ENCODE measurements at regions of chr1 and their contacts with region 1.

Region 1: GRCh38 chr1:160951443-160952128 is 3.0 kb downstream of the ITLN2 start:
- DNase-seq: peak; percentile 81
- H3K4me3 Mint-ChIP-seq: no peak overlapping the region
- H3K27ac Mint-ChIP-seq: no peak overlapping the region
- H3K4me1 Mint-ChIP-seq: peaks cover 7% of the 10 kb centered on the region
- H3K27me3 Mint-ChIP-seq: no peaks in the 10 kb centered on the region

Region 2: DNA sequence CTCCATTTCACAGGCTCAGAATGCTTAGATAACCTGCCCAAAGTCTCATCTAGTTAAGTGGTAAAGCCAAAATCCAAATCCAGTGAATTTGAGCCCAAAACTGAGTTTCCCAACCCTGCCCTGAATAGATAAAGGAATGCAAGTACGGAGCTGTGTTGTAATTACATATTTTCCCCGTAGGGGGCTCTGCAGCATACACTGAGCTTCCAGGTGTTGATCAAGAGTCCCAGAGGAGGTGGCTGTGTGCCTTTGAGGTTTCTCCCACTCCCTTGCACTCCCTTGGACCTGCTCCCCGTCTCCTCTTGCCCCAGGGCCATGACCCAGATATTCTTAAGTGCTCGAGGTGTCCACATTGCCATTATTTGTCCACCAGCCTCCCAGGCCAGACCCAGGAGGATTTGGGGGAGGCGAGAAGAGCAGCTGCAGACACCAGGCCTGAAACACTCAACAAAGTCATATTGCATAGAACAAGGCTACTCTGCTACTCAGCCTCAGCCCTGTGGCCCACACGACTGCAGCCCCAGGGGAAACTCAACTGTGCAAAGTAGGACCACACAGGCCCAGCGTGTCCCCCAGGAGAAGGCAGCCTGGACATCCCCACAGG is 174.0 kb before region 1 on chr1:
- CTCF ChIA-PET with region 1: interaction called, 70 read pairs
- POLR2A ChIA-PET with region 1: no interaction called
- DNase-seq: peak; percentile 56
- H3K4me3 Mint-ChIP-seq: no peak overlapping the region
- H3K27ac Mint-ChIP-seq: no peak overlapping the region
- H3K4me1 Mint-ChIP-seq: peaks cover 37% of the 10 kb centered on the region
- H3K27me3 Mint-ChIP-seq: no peaks in the 10 kb centered on the region

Region 3: GRCh38 chr1:160830321-160831153 is 121.0 kb before region 1 on chr1:
- CTCF ChIA-PET with region 1: interaction called, 300 read pairs
- POLR2A ChIA-PET with region 1: interaction called, 21 read pairs
- DNase-seq: peak; percentile 80
- H3K4me3 Mint-ChIP-seq: no peak overlapping the region
- H3K27ac Mint-ChIP-seq: no peak overlapping the region
- H3K4me1 Mint-ChIP-seq: peaks cover 18% of the 10 kb centered on the region
- H3K27me3 Mint-ChIP-seq: no peaks in the 10 kb centered on the region

Region 4: DNA sequence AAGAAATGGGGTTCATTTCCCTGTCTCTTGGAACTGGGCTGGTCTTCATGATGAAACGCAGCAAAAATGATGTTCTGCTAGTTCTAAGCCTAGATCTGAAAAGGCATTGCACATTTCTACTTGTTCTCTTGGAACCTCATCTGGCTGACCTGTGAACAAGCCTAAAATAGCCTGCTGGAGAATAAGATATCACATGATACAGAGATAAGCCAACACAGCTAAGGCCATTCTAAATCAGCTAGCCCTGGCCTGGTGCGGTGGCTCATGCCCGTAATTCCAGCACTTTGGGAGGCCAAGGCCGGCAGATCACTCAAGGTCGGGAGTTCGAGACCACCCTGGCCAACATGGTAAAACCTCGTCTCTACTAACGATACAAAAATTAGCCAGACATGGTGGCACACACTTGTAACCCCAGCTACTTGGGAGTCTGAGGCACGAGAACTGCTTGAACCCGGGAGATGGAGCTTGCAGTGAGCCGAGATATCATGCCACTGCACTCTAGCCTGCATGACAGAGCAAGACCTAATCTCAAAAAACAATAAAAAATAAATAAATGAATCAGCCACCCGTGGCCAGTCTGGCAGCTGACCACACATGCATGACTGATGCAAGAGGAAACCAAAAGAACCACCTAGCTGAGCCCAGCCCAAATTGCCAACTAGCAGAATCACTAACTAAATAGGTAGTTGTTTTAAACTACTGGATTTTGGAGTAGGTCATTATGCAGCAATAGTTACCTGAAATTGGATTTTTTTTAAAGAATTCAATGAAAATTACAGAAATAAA is 106.9 kb before region 1 on chr1:
- CTCF ChIA-PET with region 1: interaction called, 300 read pairs
- POLR2A ChIA-PET with region 1: no interaction called
- DNase-seq: peak; percentile 39
- H3K4me3 Mint-ChIP-seq: no peak overlapping the region
- H3K27ac Mint-ChIP-seq: peak overlapping the region; percentile 36
- H3K4me1 Mint-ChIP-seq: peaks cover 22% of the 10 kb centered on the region
- H3K27me3 Mint-ChIP-seq: peaks cover 15% of the 10 kb centered on the region

Region 5: DNA sequence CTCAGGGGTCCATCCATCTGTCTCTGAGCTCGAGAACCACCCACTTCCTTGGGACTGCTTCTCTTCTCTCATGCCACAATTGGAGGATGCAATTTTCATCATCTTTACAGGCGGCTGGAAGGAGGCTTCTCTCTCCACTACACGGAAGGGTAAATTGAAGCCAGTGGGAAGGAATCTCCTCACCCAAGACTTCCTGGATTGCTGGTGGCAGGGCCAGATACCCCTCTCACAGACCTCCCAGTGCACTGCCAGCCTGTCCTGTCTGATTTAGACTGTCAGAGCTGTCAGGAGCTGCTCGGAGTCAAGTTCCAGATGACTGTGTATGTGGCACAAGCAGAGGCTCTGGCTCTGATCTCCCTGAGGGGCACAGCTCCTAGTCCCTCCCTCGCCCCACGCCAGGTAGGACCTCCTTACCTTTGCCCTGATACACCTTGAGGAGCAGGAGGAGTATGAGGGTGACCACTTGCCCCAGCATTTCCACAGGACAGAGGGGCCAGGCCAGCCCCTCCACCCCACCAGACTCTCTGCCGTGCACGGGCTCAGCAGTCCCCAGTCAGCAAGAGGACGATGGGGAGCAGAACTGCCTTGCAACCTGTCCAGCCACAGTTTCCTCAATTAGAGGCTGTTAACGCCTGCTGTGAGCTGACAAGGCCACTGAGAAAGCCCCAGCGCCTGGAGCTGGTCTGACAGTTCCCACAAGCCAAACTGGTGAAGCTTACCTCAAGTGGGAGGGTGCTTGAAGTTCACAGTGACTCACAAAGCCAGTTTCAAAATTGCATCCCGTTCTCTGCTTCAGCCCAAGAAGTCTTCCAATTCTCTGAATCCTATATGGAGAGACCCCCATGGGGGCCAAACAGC is 89.2 kb before region 1 on chr1 and contains the start of gene CD244:
- CTCF ChIA-PET with region 1: interaction called, 10 read pairs
- POLR2A ChIA-PET with region 1: no interaction called
- DNase-seq: peak; percentile 73
- H3K4me3 Mint-ChIP-seq: peak within 1 kb of the TSS; percentile 33
- H3K27ac Mint-ChIP-seq: peak within 1 kb of the TSS; percentile 66
- H3K4me1 Mint-ChIP-seq: peaks cover 29% of the 10 kb centered on the region
- H3K27me3 Mint-ChIP-seq: peaks cover 3% of the 10 kb centered on the region
- total RNA-seq, gene CD244: 2.0 to 2.3 TPM

Region 6: DNA sequence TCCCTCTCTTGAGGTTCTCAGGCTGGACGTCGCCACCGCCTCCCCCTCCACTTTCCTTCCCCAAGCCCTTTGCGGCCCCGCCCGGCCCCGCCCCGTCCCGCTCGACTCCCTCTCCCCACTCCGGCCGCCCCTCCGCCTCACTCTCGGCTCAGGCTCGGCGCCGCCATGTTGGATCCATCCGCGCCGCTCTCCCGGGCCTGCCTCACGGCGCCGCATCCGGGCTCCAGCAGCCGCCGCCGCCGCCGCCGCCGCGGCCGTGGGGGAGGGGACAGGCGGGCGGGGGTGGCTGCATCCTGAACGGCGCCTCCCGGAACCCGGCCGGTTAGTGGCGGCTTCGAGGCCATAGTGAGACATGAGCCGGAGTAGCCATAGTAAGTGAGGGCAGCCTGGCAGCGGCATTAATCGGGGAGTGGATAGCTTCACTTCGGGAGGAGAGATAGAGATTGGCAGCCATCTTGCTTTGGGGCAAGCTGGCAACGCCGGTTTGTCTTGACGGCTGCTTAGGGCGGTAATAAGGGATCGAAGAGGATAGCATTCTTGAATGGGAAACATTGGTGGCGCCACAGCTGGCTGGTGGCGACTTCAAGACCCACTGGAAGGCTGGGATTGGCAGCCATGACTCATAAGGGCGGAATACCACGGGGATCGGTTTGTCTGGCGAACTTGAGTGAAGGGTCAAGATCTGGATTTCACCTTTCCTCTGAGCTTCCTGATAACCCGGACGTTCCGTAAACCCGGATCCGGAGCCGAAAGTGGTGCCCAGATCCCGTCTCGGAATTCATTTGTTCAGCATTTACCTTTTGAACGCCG is 181.0 kb after region 1 on chr1 and contains the start of gene DEDD:
- CTCF ChIA-PET with region 1: no interaction called
- POLR2A ChIA-PET with region 1: no interaction called
- DNase-seq: peak; percentile 94
- H3K4me3 Mint-ChIP-seq: no peak within 1 kb of the TSS
- H3K27ac Mint-ChIP-seq: no peak within 1 kb of the TSS
- H3K4me1 Mint-ChIP-seq: peaks cover 43% of the 10 kb centered on the region
- H3K27me3 Mint-ChIP-seq: no peaks in the 10 kb centered on the region
- total RNA-seq, gene DEDD: 38.2 to 40.0 TPM

Region 7: DNA sequence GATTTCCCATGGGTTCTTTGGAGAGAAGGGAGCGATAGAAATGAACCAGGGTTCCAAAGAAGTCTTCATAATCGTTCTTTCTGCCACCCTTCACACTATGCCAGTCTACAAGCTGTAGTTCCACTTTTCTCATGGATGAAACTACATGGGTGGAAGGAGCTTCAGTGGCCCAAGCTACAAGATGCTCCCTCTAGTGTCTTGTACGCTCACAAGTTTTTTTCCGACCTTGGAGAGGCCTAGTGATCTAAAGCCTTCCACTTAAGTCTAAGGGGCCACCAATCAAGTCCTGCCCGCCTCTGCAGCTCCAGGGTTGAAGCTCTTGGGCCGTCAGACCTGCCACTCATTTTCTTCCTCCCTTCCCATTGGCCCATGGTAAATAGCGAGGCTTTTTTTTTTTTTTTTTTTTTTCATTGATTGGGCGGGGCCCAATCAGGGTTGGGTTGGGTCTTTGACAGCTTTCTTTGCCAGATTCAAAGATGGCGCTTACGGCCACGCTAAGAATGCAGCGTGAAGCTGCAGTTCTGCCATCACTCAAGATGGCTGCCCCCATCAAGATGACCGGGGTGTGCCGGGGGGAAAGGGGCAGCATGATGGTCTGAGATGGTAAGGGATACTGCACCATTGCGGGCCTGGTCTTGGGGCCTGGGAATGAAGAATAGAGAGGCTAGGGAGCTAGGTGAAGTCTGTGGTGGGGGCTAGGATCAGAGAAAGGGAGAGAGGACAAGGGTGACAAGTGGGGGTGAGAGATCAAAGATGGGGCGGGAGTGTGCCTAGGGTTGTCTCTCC is 274.1 kb after region 1 on chr1 and contains the start of gene TOMM40L:
- CTCF ChIA-PET with region 1: no interaction called
- POLR2A ChIA-PET with region 1: no interaction called
- DNase-seq: peak; percentile 90
- H3K4me3 Mint-ChIP-seq: peak within 1 kb of the TSS; percentile 100
- H3K27ac Mint-ChIP-seq: peak within 1 kb of the TSS; percentile 94
- H3K4me1 Mint-ChIP-seq: peaks cover 45% of the 10 kb centered on the region
- H3K27me3 Mint-ChIP-seq: no peaks in the 10 kb centered on the region
- total RNA-seq, gene TOMM40L: 17.4 to 18.1 TPM

Measured in activated CD4-positive, alpha-beta memory T cell treated with anti-CD3 and anti-CD28 coated beads, Interleukin-2, amount 10 ng/mL, durations not matched to agents 7 days and 5 days (primary cell).